Common myeloid progenitor, CD34-positive (primary cell): ENCODE measurements at regions of chr2 and their contacts with region 1.

Region 1: GRCh38 chr2:42404676-42405075 is 43.7 kb upstream of the COX7A2L start:
- DNase-seq: no peak
- H3K4me3 ChIP-seq: no peak overlapping the region
- H3K27ac ChIP-seq: no peak overlapping the region
- H3K4me1 ChIP-seq: no peaks in the 10 kb centered on the region
- H3K27me3 ChIP-seq: no peaks in the 10 kb centered on the region

Region 2: DNA sequence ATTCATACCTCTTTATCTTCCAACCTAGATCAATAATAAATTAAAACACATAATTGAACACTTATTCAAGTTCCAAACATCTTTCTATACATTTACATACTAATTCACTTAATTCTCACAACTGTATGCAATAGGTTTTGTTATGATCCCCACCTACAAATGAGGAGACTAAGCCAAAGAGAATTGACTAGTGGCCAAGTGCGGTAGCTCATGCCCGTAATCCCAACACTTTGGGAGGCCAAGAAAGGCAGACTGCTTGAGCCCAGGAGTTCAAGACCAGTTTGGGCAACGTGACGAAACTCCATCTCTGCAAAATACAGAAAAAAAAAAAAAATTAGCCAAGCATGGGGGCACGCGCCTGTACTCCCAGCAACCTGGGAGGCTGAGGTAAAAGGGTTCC is 52.3 kb after region 1 on chr2:
- CTCF ChIA-PET with region 1: no interaction called
- POLR2A ChIA-PET with region 1: interaction called, 10 read pairs
- DNase-seq: no peak
- H3K4me3 ChIP-seq: no peak overlapping the region
- H3K27ac ChIP-seq: no peak overlapping the region
- H3K4me1 ChIP-seq: no peaks in the 10 kb centered on the region
- H3K27me3 ChIP-seq: peaks cover 0 to 4% (median 3%) of the 10 kb centered on the region in 5 experiments